Activated CD4-positive, alpha-beta T cell treated with anti-CD3 and anti-CD28 coated beads for 36 hours (primary cell): ENCODE measurements at regions of chr2 and their contacts with region 1.

Region 1: DNA sequence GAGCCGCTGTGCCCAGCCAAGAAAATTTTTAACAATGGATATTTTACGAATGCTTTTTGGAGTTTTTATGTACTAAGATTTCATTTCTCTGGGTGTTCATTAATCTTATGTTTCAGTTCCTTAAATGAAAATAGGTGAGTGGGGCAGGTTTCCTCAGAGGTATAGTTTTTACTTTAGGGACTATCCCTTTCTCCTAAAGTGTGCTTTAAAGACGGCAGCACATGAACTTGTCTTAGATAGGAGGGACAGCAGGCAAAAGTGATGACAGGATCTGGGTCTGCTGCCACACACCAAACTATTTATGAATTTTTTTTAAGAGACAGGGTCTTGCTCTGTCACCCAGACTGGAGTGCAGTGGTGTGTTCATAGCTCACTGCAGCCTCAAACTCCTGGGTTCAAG is 8.0 kb upstream of the REL start:
- DNase-seq: peak; percentile 42
- ATAC-seq: peak; percentile 60
- H3K4me3 Mint-ChIP-seq: peak overlapping the region; percentile 25
- H3K27ac Mint-ChIP-seq: peak overlapping the region; percentile 85
- H3K4me1 Mint-ChIP-seq: peaks cover 31% of the 10 kb centered on the region
- H3K27me3 Mint-ChIP-seq: no peaks in the 10 kb centered on the region

Region 2: GRCh38 chr2:60806988-60807681 is 66.2 kb before region 1 on chr2:
- CTCF ChIA-PET with region 1: interaction called, 5 read pairs
- POLR2A ChIA-PET with region 1: no interaction called
- intact Hi-C with region 1: loop called (anchors 1 to 2 kb)
- DNase-seq: peak; percentile 83
- ATAC-seq: peak; percentile 92
- H3K4me3 Mint-ChIP-seq: peak overlapping the region; percentile 41
- H3K27ac Mint-ChIP-seq: peak overlapping the region; percentile 86
- H3K4me1 Mint-ChIP-seq: peaks cover 53% of the 10 kb centered on the region
- H3K27me3 Mint-ChIP-seq: no peaks in the 10 kb centered on the region

Region 3: GRCh38 chr2:60832621-60833020 is 40.8 kb before region 1 on chr2:
- CTCF ChIA-PET with region 1: interaction called, 3 read pairs
- POLR2A ChIA-PET with region 1: interaction called, 3 read pairs
- intact Hi-C with region 1: loop called (anchors 1 to 2 kb)
- DNase-seq: no peak
- ATAC-seq: peak; percentile 89
- H3K4me3 Mint-ChIP-seq: no peak overlapping the region
- H3K27ac Mint-ChIP-seq: peak overlapping the region; percentile 80
- H3K4me1 Mint-ChIP-seq: peaks cover 41% of the 10 kb centered on the region
- H3K27me3 Mint-ChIP-seq: peaks cover 4% of the 10 kb centered on the region

Region 4: DNA sequence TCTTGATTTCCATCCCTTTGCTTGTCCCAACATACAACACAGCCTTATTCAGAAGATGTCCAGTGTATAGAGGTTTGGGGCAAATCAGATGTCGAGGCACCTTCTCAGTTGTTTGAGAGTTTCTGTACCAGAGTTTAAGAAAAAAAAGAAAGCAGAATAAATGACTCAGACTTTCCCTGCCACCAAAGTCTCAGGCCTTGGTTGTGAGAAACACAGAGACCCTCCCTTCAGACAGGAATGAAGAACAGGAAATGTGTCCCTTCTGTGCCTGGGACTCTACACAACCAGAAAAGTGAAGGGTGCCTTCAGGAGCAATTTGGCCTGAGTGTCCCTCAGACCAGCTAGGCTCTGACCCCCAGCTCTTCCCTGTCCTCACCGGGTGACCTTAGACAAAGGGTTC is 29.3 kb before region 1 on chr2:
- CTCF ChIA-PET with region 1: no interaction called
- POLR2A ChIA-PET with region 1: no interaction called
- intact Hi-C with region 1: loop called in 1 of 2 experiments (anchors 2 kb)
- DNase-seq: peak; percentile 50
- ATAC-seq: peak; percentile 82
- H3K4me3 Mint-ChIP-seq: no peak overlapping the region
- H3K27ac Mint-ChIP-seq: peak overlapping the region; percentile 28
- H3K4me1 Mint-ChIP-seq: peaks cover 26% of the 10 kb centered on the region
- H3K27me3 Mint-ChIP-seq: no peaks in the 10 kb centered on the region

Region 5: DNA sequence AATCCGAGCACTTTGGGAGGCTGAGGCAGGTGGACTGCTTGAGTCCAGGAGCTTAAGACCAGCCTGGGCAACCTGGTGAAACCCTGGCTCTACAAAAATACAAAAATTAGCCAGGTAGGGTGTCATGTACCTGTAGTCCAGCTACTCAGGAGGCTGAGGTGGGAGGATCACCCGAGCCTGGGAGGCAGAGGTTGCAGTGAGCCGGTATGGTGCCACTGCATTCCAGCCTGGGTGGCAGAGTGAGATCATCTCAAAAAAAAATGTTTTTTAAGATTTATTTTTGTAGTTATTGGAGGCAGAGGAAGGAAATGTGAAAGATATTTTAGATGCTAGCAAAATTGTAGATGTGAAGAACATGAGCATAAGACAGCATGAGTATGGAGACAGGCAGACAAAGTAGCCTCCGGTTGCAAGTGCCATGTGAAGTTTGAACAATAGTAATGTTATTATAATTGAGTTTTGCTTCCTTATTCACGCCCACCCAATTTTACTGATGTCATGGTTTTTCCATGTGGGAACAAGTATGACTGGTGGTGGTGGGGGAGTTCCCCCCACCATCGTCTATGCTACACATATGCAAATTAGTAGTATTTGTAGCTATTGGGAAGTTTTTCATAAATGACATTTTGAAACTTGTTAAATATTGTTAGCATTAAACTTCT is 26.0 kb after region 1 on chr2:
- CTCF ChIA-PET with region 1: interaction called, 3 read pairs
- POLR2A ChIA-PET with region 1: no interaction called
- intact Hi-C with region 1: loop called in 1 of 2 experiments (anchors 1 kb)
- DNase-seq: peak; percentile 74
- ATAC-seq: peak; percentile 86
- H3K4me3 Mint-ChIP-seq: peak overlapping the region; percentile 35
- H3K27ac Mint-ChIP-seq: peak overlapping the region; percentile 79
- H3K4me1 Mint-ChIP-seq: peaks cover 46% of the 10 kb centered on the region
- H3K27me3 Mint-ChIP-seq: no peaks in the 10 kb centered on the region